Ascending aorta (tissue), 2 donors: ENCODE measurements at regions of chr18 and their contacts with region 1.

Region 1: GRCh38 chr18:36366994-36367839 is 69.7 kb downstream of the FHOD3 start:
- DNase-seq: peak in 1 of 2 donors; percentile 74
- H3K4me3 ChIP-seq: no peak overlapping the region
- H3K27ac ChIP-seq: peak overlapping the region; percentile 35 to 60
- H3K4me1 ChIP-seq: peaks cover 0 to 29% of the 10 kb centered on the region in 2 donors
- H3K27me3 ChIP-seq: no peaks in the 10 kb centered on the region
- CTCF ChIP-seq: no peak

Region 2: DNA sequence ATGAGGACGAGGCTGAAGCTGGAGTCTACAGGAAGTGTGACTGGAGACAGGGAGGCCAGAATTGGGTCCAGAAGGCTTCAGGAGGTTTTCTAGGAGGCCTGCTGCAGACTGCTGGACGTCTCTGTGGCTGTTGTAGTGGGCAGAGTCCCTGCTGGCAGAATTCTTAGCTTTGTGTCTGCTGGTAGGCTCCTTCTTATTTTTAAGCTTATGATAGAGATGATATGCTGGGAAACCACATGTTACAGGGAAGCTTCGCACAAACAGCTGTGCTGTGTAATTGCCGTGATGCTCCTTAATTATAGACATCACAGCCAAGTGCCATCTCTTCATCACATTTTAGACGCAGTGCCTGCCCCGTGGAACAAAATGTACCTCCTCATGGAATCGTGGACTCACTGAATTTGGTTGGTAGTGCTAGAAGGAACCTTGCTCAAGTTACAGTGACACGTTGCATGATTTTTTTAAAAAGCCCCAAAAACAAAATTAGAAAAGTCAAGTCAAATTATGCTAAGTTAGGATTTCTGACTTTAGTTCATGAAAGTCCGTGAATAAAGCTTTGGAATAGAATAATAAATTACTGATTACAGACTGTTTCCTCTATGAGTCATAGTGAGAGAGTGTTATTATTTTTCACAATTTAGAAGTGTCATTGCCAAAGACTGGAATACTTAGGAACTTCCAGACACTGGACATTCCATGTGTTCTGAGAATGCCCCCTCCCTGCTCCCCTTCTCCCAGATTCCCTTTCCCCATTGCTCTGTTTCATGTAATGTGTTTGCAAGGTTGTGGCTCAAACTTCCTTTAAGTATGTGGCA is 74.4 kb after region 1 on chr18:
- intact Hi-C with region 1: loop called (anchors 5 kb)
- DNase-seq: no peak
- H3K4me3 ChIP-seq: peak overlapping the region; percentile 2 to 27
- H3K27ac ChIP-seq: peak overlapping the region; percentile 78 to 85
- H3K4me1 ChIP-seq: peaks cover 23 to 52% of the 10 kb centered on the region in 2 donors
- H3K27me3 ChIP-seq: no peaks in the 10 kb centered on the region
- CTCF ChIP-seq: no peak

Region 3: DNA sequence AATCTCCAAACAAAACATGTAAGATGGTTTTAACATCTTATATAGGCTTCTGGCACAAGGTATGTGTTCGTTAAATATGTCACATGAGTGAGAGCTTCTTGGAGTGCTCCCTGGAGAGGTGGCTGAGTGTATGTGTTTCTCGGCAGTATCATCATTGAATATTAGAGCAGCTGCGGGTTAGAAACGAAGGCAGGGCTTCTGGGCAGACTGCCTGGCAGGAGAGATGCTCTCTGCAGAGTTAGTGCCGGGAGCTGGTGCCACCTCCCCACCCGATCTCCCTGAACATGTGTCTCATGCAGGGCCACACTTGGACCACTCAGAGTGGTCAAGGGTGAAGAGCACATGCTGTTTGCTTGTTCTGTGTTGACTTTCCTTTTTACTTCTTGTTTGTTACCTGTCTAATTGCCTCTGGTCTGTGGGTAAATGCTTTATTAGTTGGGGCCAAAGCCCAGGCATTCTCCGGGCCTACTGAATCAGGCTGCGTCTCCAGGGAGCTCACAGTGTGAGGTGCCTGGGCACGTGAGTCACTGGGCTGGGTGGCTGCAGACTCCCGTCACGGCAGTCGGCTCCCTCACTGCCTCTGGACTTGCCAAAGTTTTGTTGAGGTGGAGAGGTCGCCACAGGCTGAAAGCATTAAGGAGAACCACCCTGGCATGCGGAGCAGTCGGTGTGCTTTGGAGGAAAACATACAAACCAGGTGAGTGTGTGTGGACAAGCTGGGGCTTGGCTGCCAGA is 176.9 kb after region 1 on chr18:
- intact Hi-C with region 1: no loop called
- DNase-seq: peak; percentile 62 to 89
- H3K4me3 ChIP-seq: peak overlapping the region in 1 of 2 donors; percentile 29
- H3K27ac ChIP-seq: peak overlapping the region; percentile 69 to 78
- H3K4me1 ChIP-seq: peaks cover 0 to 16% of the 10 kb centered on the region in 2 donors
- H3K27me3 ChIP-seq: no peaks in the 10 kb centered on the region
- CTCF ChIP-seq: no peak